ENCODE measurements at regions of chr3 and their contacts with region 1.

Region 1: GRCh38 chr3:133246119-133246518 is 153.7 kb upstream of the BFSP2 start:
- DNase-seq: peak in 2 of 3 donors; percentile 55 to 63
- ATAC-seq: peak; percentile 89 to 90
- H3K4me3 ChIP-seq: no peak overlapping the region
- H3K27ac ChIP-seq: no peak overlapping the region
- H3K4me1 ChIP-seq: peaks cover 3% of the 10 kb centered on the region
- H3K27me3 ChIP-seq: no peaks in the 10 kb centered on the region

Region 2: GRCh38 chr3:133192363-133192945 is 53.7 kb before region 1 on chr3:
- intact Hi-C with region 1: loop called in 1 of 4 experiments (anchors 10 kb)
- DNase-seq: peak in 1 of 3 donors; percentile 22
- ATAC-seq: peak in 1 of 2 donors; percentile 23
- H3K4me3 ChIP-seq: no peak overlapping the region
- H3K27ac ChIP-seq: no peak overlapping the region
- H3K4me1 ChIP-seq: peaks cover 9% of the 10 kb centered on the region
- H3K27me3 ChIP-seq: no peaks in the 10 kb centered on the region

Measured in right cardiac atrium (tissue), 5 donors.